HEK293 (cell line): ENCODE measurements at regions of chr2 and their contacts with region 1.

Region 1: DNA sequence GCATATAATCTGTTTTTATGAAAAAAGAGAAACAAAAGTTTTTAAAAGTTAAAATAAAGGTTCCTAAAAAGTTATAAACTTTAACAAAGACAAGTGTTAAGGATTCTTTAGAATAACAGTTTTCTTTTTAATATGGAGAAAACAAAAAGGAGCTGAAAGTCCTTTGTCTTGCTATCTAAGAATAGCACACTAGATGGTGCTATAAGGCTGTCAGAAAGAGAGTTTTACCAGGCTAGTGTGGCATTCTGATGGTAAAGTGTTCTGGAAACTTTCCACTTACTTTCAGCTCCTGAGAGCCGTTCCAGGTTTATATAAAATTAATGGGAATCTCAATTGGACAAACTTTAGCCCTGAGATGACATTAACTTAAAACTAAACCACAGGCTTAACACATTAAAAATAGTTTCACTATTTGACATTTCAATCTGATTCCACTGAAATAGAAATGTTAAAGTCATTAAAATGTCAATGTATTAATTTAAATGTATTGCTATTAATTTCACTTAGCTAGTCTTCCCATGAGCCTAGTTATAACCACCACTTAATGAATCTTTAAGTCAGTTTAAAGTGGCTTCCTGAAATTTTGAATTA is 3.7 kb downstream of the FBXO48 start:
- H3K4me3 ChIP-seq: no peak overlapping the region
- H3K27ac ChIP-seq: no peak overlapping the region
- H3K4me1 ChIP-seq: peaks cover 4% of the 10 kb centered on the region; the same call in 1 of the 2 replicates
- CTCF ChIP-seq: peak; percentile 17; the same call in 1 of the 2 replicates

Region 2: GRCh38 chr2:68272246-68272994 is 191.0 kb before region 1 on chr2:
- CTCF ChIA-PET with region 1: no interaction called
- POLR2A ChIA-PET with region 1: no interaction called
- H3K4me3 ChIP-seq: no peak overlapping the region
- H3K27ac ChIP-seq: no peak overlapping the region
- H3K4me1 ChIP-seq: no peaks in the 10 kb centered on the region
- CTCF ChIP-seq: no peak

Region 3: GRCh38 chr2:68594674-68595492 is 131.5 kb after region 1 on chr2:
- CTCF ChIA-PET with region 1: interaction called, 19 read pairs
- POLR2A ChIA-PET with region 1: no interaction called
- H3K4me3 ChIP-seq: no peak overlapping the region
- H3K27ac ChIP-seq: no peak overlapping the region
- H3K4me1 ChIP-seq: no peaks in the 10 kb centered on the region
- CTCF ChIP-seq: peak; percentile 41; the same call in 1 of the 2 replicates

Region 4: GRCh38 chr2:68709421-68709911 is 246.1 kb after region 1 on chr2:
- CTCF ChIA-PET with region 1: interaction called, 37 read pairs
- POLR2A ChIA-PET with region 1: no interaction called
- H3K4me3 ChIP-seq: no peak overlapping the region
- H3K27ac ChIP-seq: no peak overlapping the region
- H3K4me1 ChIP-seq: no peaks in the 10 kb centered on the region; the same call in 1 of the 2 replicates
- CTCF ChIP-seq: 0 out of 2 replicates have a peak, but pooled peaks have one; percentile 45

Region 5: GRCh38 chr2:68837164-68837860 is 373.9 kb after region 1 on chr2:
- CTCF ChIA-PET with region 1: interaction called, 12 read pairs
- POLR2A ChIA-PET with region 1: no interaction called
- H3K4me3 ChIP-seq: no peak overlapping the region
- H3K27ac ChIP-seq: no peak overlapping the region
- H3K4me1 ChIP-seq: no peaks in the 10 kb centered on the region
- CTCF ChIP-seq: no peak

Region 6: GRCh38 chr2:68925295-68925896 is 462.0 kb after region 1 on chr2:
- CTCF ChIA-PET with region 1: interaction called, 52 read pairs
- POLR2A ChIA-PET with region 1: interaction called, 3 read pairs
- H3K4me3 ChIP-seq: no peak overlapping the region
- H3K27ac ChIP-seq: no peak overlapping the region
- H3K4me1 ChIP-seq: no peaks in the 10 kb centered on the region
- CTCF ChIP-seq: peak; percentile 46; the same call in 1 of the 2 replicates